Endothelial cell of umbilical vein (primary cell): ENCODE measurements at regions of chr15 and their contacts with region 1.

Region 1: GRCh38 chr15:39580117-39580484 is 778 bp upstream of the THBS1 start:
- DNase-seq: peak; percentile 93
- H3K4me3 ChIP-seq: peak overlapping the region; percentile 7 to 61 (median 55)
- H3K27ac ChIP-seq: peak overlapping the region; percentile 98
- H3K4me1 ChIP-seq: peaks cover 20% of the 10 kb centered on the region
- H3K27me3 ChIP-seq: no peaks in the 10 kb centered on the region
- CTCF ChIP-seq: peak; percentile 93 to 96
- POLR2A ChIP-seq: peak; percentile 74

Region 2: DNA sequence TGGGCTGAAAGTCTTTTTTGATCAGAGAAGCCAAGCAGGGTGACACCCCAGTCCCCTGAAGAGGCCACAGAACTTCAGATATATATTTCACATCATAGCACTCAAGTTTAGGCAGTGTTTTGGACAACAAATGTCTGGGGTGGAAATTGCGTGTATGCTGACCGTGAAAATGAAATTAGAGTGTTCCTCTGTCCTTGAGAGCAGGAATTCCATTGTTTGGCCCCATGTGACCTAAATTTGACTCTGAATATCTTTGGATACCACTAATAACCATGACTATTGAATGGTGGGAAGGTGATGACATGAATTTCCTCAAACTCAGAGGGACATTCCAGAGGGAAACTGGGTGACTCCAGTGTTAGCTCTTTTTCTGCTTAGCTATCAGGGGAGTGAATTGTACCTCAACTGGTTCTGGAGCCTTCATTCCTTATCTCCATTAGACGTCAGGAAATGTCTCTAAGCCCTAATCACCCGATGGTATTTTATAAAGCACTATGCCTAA is 752.0 kb before region 1 on chr15:
- CTCF ChIA-PET with region 1: interaction called, 5 read pairs
- POLR2A ChIA-PET with region 1: interaction called, 24 read pairs
- dilution Hi-C with region 1: no loop called
- intact Hi-C with region 1: loop called (anchors 1 kb)
- DNase-seq: peak; percentile 100
- H3K4me3 ChIP-seq: no peak overlapping the region
- H3K27ac ChIP-seq: peak overlapping the region; percentile 100
- H3K4me1 ChIP-seq: peaks cover 59% of the 10 kb centered on the region
- H3K27me3 ChIP-seq: no peaks in the 10 kb centered on the region
- CTCF ChIP-seq: no peak
- POLR2A ChIP-seq: peak; percentile 65

Region 3: GRCh38 chr15:39132954-39133600 is 447.0 kb before region 1 on chr15:
- CTCF ChIA-PET with region 1: interaction called, 20 read pairs
- POLR2A ChIA-PET with region 1: interaction called, 118 read pairs
- dilution Hi-C with region 1: no loop called
- intact Hi-C with region 1: loop called (anchors 1 kb)
- DNase-seq: peak; percentile 64
- H3K4me3 ChIP-seq: no peak overlapping the region
- H3K27ac ChIP-seq: peak overlapping the region; percentile 48
- H3K4me1 ChIP-seq: peaks cover 53% of the 10 kb centered on the region
- H3K27me3 ChIP-seq: no peaks in the 10 kb centered on the region
- CTCF ChIP-seq: no peak
- POLR2A ChIP-seq: no peak

Region 4: DNA sequence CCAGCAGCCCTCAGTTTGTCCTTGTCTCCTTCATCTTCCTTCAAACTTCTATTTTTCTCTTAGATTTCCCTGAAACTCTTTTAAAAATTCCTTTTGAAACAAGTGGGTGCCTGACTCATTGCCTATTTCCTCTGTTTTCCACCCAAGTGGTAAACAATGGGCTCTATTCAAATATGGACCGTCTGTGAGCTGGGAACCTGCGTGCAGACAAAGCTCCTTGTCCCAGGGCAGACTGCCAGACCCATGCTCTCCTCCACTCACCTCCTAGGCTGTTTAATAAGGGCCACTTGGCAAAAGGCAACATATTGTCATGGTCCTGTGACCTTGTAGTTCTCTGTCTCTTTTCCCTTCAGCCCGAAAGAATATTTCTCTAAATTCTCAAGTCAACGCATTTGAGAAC is 331.9 kb before region 1 on chr15:
- CTCF ChIA-PET with region 1: interaction called, 14 read pairs
- POLR2A ChIA-PET with region 1: interaction called, 24 read pairs
- dilution Hi-C with region 1: no loop called
- intact Hi-C with region 1: loop called (anchors 1 kb)
- DNase-seq: peak; percentile 99
- H3K4me3 ChIP-seq: peak overlapping the region in 1 of 3 experiments; percentile 0
- H3K27ac ChIP-seq: peak overlapping the region; percentile 98
- H3K4me1 ChIP-seq: peaks cover 72% of the 10 kb centered on the region
- H3K27me3 ChIP-seq: no peaks in the 10 kb centered on the region
- CTCF ChIP-seq: no peak
- POLR2A ChIP-seq: no peak

Region 5: DNA sequence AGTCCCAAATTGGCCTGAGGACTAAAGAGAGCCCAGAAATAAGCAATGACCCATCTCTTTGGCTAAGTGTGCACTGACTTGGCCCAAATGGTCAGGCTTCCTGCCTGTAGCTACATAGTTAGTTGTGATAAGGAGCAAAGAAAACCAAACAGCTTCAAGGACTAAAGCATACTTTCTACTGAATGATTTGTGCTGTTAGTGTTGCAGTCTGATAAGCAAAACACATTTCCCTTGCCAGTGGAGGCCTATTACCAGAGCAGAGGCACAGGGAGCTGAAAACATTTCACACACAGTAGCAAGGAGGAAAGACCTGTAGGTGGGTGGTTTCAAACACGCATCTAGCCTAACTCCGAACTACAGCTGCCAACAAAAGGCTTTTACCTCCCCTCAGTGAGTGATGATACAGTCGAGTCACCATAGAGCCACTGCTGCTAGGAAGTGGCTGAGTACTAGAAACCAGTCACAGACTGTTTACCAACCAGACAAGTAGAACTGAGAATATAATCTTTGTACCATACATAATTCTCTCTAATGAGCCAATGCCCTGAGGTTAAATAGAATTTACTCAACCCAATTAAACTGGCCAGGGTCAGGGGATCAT is 221.6 kb before region 1 on chr15:
- CTCF ChIA-PET with region 1: interaction called, 72 read pairs
- POLR2A ChIA-PET with region 1: interaction called, 86 read pairs
- dilution Hi-C with region 1: no loop called
- intact Hi-C with region 1: loop called (anchors 1 kb)
- DNase-seq: peak; percentile 97
- H3K4me3 ChIP-seq: no peak overlapping the region
- H3K27ac ChIP-seq: peak overlapping the region; percentile 100
- H3K4me1 ChIP-seq: peaks cover 63% of the 10 kb centered on the region
- H3K27me3 ChIP-seq: no peaks in the 10 kb centered on the region
- CTCF ChIP-seq: no peak
- POLR2A ChIP-seq: peak; percentile 56

Region 6: GRCh38 chr15:39602143-39602542 is 22.0 kb after region 1 on chr15:
- CTCF ChIA-PET with region 1: no interaction called
- POLR2A ChIA-PET with region 1: interaction called, 14 read pairs
- dilution Hi-C with region 1: no loop called
- intact Hi-C with region 1: no loop called
- DNase-seq: no peak
- H3K4me3 ChIP-seq: no peak overlapping the region
- H3K27ac ChIP-seq: no peak overlapping the region
- H3K4me1 ChIP-seq: peaks cover 7% of the 10 kb centered on the region
- H3K27me3 ChIP-seq: no peaks in the 10 kb centered on the region
- CTCF ChIP-seq: peak; percentile 24 to 31
- POLR2A ChIP-seq: no peak